ENCODE measurements at regions of chr1 and their contacts with region 1.

Region 1: DNA sequence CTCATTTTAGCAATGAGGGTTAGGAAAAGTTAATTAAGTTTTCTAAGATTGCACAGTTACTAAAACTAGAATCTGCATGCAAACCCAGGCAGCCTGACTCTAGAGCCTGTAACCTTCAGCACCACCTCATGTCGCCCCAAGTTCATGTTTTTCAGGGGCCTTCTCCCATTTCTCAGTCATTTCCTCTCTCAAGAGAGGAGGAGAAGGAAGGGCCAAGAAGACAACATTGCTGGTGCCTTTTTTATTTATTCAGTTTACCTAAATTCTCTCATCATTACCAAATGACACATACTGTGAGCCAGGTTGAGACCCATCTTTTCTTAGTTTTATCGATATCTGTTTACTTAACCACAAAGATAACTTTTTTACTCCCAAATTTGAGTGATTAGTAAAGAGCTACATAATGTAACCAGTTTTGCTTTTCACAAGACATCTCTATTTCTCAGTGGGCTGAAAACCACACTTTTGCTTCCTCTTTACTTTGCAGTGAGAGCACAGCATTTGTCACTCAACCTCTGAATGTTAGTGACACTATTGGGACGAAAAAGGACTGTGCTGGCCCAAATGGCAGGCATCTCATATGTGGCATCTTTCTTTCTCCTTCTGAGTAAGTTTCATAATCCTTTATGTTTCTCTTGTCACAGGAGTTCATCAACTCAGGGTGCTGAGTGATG is at the start of gene CD101:
- DNase-seq: peak; percentile 72
- H3K4me3 Mint-ChIP-seq: peak within 1 kb of the TSS; percentile 8
- H3K27ac Mint-ChIP-seq: peak within 1 kb of the TSS; percentile 82
- H3K4me1 Mint-ChIP-seq: peaks cover 59% of the 10 kb centered on the region
- H3K27me3 Mint-ChIP-seq: no peaks in the 10 kb centered on the region
- total RNA-seq, gene CD101: 0.83 to 1.1 TPM

Region 2: GRCh38 chr1:116785006-116785405 is 216.4 kb before region 1 on chr1:
- CTCF ChIA-PET with region 1: no interaction called
- intact Hi-C with region 1: no loop called
- DNase-seq: no peak
- H3K4me3 Mint-ChIP-seq: no peak overlapping the region
- H3K27ac Mint-ChIP-seq: no peak overlapping the region
- H3K4me1 Mint-ChIP-seq: peaks cover 16% of the 10 kb centered on the region
- H3K27me3 Mint-ChIP-seq: no peaks in the 10 kb centered on the region

Region 3: DNA sequence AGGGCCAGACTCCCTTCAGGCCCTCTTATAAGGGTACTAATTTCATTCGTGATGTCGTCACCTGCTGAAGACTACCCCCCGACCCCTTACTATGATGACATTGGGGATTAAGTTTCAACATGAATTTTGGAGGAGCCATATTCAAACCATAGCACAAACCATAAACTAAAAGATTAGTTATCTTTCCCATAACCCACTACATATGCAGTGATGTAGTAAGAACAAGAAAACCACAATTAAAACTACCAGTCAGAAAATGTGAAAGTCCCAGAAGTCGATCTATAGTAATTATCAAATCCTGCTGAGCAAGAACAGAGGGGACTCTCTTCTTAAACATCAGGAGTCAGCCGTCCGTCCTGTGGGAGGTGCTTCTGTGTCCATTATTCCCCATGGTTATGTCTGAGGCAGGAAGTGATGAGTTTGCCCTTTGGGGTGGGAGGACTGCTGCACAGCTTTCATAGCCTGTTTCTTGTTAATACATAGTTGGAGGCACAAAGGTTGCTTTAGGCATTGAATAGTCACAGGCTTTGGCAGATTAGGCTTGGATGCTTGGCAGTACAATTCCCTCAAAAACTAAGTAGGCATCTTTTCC is 127.6 kb before region 1 on chr1:
- CTCF ChIA-PET with region 1: interaction called, 3 read pairs
- intact Hi-C with region 1: loop called (anchors 2 kb)
- DNase-seq: peak; percentile 72
- H3K4me3 Mint-ChIP-seq: no peak overlapping the region
- H3K27ac Mint-ChIP-seq: peak overlapping the region; percentile 48
- H3K4me1 Mint-ChIP-seq: peaks cover 31% of the 10 kb centered on the region
- H3K27me3 Mint-ChIP-seq: no peaks in the 10 kb centered on the region

Region 4: DNA sequence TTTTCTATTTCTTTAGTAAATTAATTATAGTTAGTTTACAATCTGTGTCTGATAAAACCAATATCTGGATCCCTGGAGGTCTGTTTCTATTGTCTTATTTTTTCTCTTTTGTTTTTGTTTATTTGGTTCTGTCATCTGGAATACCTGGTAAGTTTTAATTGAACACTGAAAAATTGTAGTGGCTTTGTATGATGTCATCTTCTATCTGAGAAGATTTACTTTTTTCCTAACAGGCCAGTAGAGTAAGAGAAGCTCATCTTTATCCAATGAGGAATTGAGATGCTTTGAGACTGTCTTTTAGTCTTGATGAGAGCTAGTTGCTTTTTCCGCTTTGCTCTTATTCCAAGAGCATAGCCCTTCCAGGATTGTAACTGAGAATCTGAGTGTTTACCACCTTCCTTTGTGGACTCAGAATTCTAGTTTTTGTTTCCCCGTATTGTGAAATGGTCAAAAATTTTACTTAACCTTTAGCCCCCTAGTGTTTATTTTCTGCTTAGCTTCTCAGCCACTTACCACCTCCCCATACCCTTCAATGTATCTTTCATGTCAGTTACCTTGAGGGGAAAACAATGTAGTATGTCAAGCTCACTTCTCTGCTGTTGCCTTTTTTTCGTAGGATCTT is 66.7 kb before region 1 on chr1:
- CTCF ChIA-PET with region 1: interaction called, 3 read pairs
- intact Hi-C with region 1: loop called (anchors 1 kb)
- DNase-seq: no peak
- H3K4me3 Mint-ChIP-seq: no peak overlapping the region
- H3K27ac Mint-ChIP-seq: no peak overlapping the region
- H3K4me1 Mint-ChIP-seq: peaks cover 18% of the 10 kb centered on the region
- H3K27me3 Mint-ChIP-seq: no peaks in the 10 kb centered on the region

Region 5: GRCh38 chr1:116987256-116987555 is 14.2 kb before region 1 on chr1:
- CTCF ChIA-PET with region 1: interaction called, 4 read pairs
- intact Hi-C with region 1: loop called (anchors 1 kb)
- DNase-seq: peak; percentile 83
- H3K4me3 Mint-ChIP-seq: peak overlapping the region; percentile 68
- H3K27ac Mint-ChIP-seq: peak overlapping the region; percentile 91
- H3K4me1 Mint-ChIP-seq: peaks cover 60% of the 10 kb centered on the region
- H3K27me3 Mint-ChIP-seq: no peaks in the 10 kb centered on the region

Region 6: GRCh38 chr1:117051224-117052064 is 50.1 kb after region 1 on chr1:
- CTCF ChIA-PET with region 1: interaction called, 3 read pairs
- intact Hi-C with region 1: loop called (anchors 1 kb)
- DNase-seq: peak; percentile 69
- H3K4me3 Mint-ChIP-seq: peak overlapping the region; percentile 45
- H3K27ac Mint-ChIP-seq: peak overlapping the region; percentile 28
- H3K4me1 Mint-ChIP-seq: peaks cover 61% of the 10 kb centered on the region
- H3K27me3 Mint-ChIP-seq: no peaks in the 10 kb centered on the region

Region 7: GRCh38 chr1:117367047-117368018 is 365.9 kb after region 1 on chr1 and contains the start of gene MAN1A2:
- CTCF ChIA-PET with region 1: no interaction called
- intact Hi-C with region 1: loop called (anchors 10 kb)
- DNase-seq: peak; percentile 76
- H3K4me3 Mint-ChIP-seq: peak within 1 kb of the TSS; percentile 94
- H3K27ac Mint-ChIP-seq: peak within 1 kb of the TSS; percentile 94
- H3K4me1 Mint-ChIP-seq: peaks cover 48% of the 10 kb centered on the region
- H3K27me3 Mint-ChIP-seq: no peaks in the 10 kb centered on the region
- total RNA-seq, gene MAN1A2: 14.6 to 17.4 TPM

Measured in activated naive CD4-positive, alpha-beta T cell treated with anti-CD3 and anti-CD28 coated beads for 36 hours (primary cell).